MCF 10A (cell line): ENCODE measurements at regions of chr12 and their contacts with region 1.

Region 1: DNA sequence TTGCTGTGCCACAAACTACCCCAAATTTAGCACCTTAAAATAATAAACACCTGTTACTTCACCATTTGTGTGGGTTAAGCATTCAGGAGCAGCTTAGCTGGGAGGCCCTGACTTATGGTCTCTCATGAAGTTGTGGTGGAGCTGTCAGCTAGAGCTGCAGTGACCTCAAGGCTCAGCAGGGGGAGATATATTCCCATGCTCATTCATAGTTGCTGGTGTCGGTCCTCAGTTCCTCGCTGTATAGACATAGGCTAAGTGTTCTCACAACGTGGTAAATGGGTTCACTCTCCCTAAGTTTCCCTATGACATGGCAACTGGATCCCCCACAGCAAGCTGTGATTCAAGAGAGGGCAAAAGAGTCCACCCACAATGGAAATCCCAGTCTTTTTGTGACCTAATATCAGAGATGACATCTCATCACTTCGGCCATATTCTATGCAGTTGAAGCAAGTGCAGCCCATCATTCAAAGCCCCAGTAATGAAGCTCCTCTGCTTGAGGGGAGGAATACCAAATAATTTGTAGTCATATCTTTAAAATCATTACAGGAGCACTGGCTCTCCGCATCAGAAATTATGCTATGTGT is 41.1 kb downstream of the PRB3 start:
- DNase-seq: peak; percentile 67
- H3K4me3 Mint-ChIP-seq: no peak overlapping the region
- H3K27ac Mint-ChIP-seq: no peak overlapping the region
- H3K4me1 Mint-ChIP-seq: no peaks in the 10 kb centered on the region
- H3K27me3 Mint-ChIP-seq: peaks cover 79% of the 10 kb centered on the region
- CTCF ChIP-seq: peak; percentile 86

Region 2: DNA sequence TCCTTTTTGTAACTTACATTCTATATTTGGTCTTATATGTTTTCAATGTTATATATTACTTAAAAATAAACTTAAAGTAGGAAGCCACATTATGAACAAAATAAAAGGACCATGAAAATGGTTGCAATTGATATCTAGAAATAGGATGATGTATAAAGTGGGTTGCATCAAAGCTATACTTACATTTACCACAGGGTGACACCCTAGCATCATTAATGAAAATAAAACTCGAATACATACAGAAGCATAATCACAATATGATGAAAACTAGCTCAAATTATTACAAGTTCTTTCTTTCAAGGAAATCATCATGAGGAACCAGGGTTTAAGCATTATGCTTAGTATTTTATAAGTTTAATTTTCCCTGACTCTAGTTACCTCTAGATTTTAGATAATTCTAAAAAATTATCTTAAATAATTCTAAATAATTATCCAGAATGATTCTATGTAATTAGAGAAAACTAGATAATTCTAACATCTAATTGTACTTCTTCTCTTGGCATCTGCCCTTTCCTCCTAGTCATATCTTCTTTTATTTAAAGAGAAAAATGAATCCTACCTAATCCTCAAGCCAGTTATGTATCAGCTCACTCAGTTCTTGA is 457.2 kb before region 1 on chr12:
- CTCF ChIA-PET with region 1: interaction called, 10 read pairs
- POLR2A ChIA-PET with region 1: no interaction called
- intact Hi-C with region 1: loop called (anchors 1 kb)
- DNase-seq: peak; percentile 56
- H3K4me3 Mint-ChIP-seq: no peak overlapping the region
- H3K27ac Mint-ChIP-seq: no peak overlapping the region
- H3K4me1 Mint-ChIP-seq: no peaks in the 10 kb centered on the region
- H3K27me3 Mint-ChIP-seq: peaks cover 94% of the 10 kb centered on the region
- CTCF ChIP-seq: peak; percentile 68

Region 3: DNA sequence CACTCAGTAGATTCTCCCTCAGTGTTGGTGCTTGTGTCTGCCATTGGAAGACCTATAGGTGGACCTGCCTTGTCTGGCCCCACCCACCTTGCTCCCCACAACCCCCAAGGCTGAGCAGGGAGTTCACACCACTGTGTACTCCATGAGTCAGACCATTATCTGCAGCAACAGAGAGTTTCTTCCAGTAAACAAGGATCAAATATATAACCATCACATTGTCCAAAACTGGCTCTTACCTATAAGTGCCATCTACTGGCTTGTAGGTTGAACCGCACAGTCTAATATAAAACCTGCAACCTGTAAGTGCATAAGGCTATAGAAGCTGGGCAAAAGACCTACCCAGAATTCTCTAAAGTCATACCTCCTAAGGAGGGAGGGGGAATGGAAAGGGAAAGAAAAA is 327.0 kb before region 1 on chr12:
- CTCF ChIA-PET with region 1: no interaction called
- POLR2A ChIA-PET with region 1: no interaction called
- intact Hi-C with region 1: no loop called
- DNase-seq: no peak
- H3K4me3 Mint-ChIP-seq: no peak overlapping the region
- H3K27ac Mint-ChIP-seq: no peak overlapping the region
- H3K4me1 Mint-ChIP-seq: no peaks in the 10 kb centered on the region
- H3K27me3 Mint-ChIP-seq: no peaks in the 10 kb centered on the region
- CTCF ChIP-seq: no peak

Region 4: DNA sequence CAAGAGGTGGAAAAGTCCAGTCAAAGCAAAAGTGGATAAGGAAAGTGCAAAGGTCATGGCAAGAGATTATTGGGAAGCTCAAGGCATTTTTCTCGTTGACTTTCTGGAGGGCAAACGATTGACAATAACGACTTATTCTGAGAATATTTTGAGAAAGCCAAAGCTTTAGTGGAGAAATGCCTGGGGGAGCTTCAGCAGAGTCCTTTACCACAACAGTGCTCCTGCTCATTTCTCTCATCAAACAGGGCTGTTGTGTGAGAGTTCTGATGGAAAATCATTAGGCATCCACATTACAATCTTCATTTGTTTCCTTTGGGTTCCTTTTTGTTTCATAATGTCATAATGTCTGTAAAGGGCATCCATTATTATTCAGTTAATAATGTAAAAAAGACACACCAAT is 14.3 kb after region 1 on chr12:
- CTCF ChIA-PET with region 1: interaction called, 11 read pairs
- POLR2A ChIA-PET with region 1: no interaction called
- intact Hi-C with region 1: no loop called
- DNase-seq: no peak
- H3K4me3 Mint-ChIP-seq: no peak overlapping the region
- H3K27ac Mint-ChIP-seq: no peak overlapping the region
- H3K4me1 Mint-ChIP-seq: no peaks in the 10 kb centered on the region
- H3K27me3 Mint-ChIP-seq: peaks cover 23% of the 10 kb centered on the region
- CTCF ChIP-seq: no peak

Region 5: DNA sequence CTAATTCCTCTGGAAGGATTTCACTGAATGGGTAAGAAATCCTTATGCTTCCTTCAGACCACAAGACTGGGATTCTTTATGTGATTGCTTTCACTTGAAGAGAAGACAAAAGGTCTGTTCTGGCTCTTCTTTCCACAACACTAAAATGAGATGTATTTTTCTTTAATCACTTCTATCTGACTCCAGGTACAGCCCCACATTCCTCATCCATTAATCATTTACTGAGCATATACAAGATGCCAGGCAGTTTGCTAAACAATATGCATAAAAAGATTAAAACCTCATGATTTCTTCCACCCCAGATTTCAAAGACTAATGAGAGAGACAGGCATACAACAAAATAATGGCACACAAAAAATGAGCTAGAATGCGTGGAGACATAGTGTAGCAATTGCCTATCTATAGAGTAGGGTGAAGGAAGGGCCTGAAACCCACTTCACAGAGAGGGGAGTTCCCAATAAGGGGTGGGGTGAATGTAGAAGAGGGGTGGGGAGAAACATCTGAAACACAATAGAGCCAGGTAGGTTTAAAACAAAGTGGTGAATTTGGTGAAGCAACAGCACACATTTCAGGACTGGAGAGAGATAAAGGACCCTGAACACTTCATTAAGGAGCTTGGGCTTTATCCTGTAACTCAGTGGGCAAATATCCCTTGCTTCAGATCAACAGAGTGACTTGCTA is 232.1 kb after region 1 on chr12:
- CTCF ChIA-PET with region 1: interaction called, 10 read pairs
- POLR2A ChIA-PET with region 1: no interaction called
- intact Hi-C with region 1: no loop called
- DNase-seq: peak; percentile 6
- H3K4me3 Mint-ChIP-seq: no peak overlapping the region
- H3K27ac Mint-ChIP-seq: no peak overlapping the region
- H3K4me1 Mint-ChIP-seq: peaks cover 12% of the 10 kb centered on the region
- H3K27me3 Mint-ChIP-seq: no peaks in the 10 kb centered on the region
- CTCF ChIP-seq: no peak